Vagina (tissue), 2 donors: ENCODE measurements at regions of chr3 and their contacts with region 1.

Region 1: GRCh38 chr3:154718053-154718452 is 288.1 kb upstream of the GPR149 start:
- DNase-seq: no peak
- H3K4me3 ChIP-seq: no peak overlapping the region
- H3K27ac ChIP-seq: no peak overlapping the region
- H3K4me1 ChIP-seq: no peaks in the 10 kb centered on the region
- H3K27me3 ChIP-seq: no peaks in the 10 kb centered on the region
- CTCF ChIP-seq: no peak
- POLR2A ChIP-seq: no peak

Region 2: GRCh38 chr3:154862265-154862664 is 144.2 kb after region 1 on chr3:
- intact Hi-C with region 1: loop called (anchors 10 kb)
- DNase-seq: no peak
- H3K4me3 ChIP-seq: no peak overlapping the region
- H3K27ac ChIP-seq: no peak overlapping the region
- H3K4me1 ChIP-seq: no peaks in the 10 kb centered on the region
- H3K27me3 ChIP-seq: no peaks in the 10 kb centered on the region
- CTCF ChIP-seq: no peak
- POLR2A ChIP-seq: no peak

Region 3: GRCh38 chr3:155093261-155093660 is 375.2 kb after region 1 on chr3:
- intact Hi-C with region 1: no loop called
- DNase-seq: no peak
- H3K4me3 ChIP-seq: no peak overlapping the region
- H3K27ac ChIP-seq: no peak overlapping the region
- H3K4me1 ChIP-seq: no peaks in the 10 kb centered on the region
- H3K27me3 ChIP-seq: no peaks in the 10 kb centered on the region
- CTCF ChIP-seq: no peak
- POLR2A ChIP-seq: no peak

Region 4: DNA sequence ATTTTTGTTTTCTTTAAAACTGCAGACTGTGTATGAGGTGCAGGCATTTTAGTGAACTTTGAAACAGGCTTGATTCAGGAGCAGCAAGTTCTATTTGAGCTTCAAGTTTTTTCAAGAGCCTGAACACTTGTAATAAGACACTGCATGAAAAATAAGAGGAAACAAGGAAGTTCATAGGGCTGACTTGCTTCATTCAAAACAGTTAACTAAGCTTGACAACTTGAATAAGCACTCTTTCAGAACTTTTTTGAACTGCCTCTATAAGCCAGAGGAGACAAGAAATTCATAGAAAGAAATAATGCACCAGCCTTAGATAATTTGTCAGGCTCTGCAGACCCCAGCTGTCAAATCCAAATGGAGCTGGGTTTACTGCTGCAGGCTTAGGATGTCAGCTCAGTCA is 1706.7 kb after region 1 on chr3:
- intact Hi-C with region 1: no loop called
- DNase-seq: no peak
- H3K4me3 ChIP-seq: no peak overlapping the region
- H3K27ac ChIP-seq: no peak overlapping the region
- H3K4me1 ChIP-seq: no peaks in the 10 kb centered on the region
- H3K27me3 ChIP-seq: no peaks in the 10 kb centered on the region
- CTCF ChIP-seq: no peak
- POLR2A ChIP-seq: no peak